ENCODE measurements at regions of chr1 and their contacts with region 1.

Region 1: DNA sequence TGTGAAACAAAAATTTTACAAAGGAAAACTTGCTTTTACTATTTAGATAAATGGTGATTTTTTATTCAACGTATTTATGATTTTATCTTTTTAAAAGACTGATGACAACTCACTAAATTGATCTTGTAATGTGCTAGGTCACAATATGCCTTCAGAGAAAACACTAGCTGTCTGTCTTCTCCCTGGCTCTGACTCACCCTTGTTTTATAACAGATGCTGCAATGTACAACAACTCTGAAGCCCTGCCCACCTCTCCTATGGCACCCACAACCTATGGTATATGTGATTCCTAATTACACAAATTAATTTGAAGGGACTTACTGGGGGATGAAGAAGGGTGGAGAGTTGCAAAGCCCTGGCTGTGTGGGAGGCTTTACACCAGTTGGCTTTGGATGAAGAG is 24.7 kb upstream of the HSD17B7 start:
- DNase-seq: no peak

Region 2: DNA sequence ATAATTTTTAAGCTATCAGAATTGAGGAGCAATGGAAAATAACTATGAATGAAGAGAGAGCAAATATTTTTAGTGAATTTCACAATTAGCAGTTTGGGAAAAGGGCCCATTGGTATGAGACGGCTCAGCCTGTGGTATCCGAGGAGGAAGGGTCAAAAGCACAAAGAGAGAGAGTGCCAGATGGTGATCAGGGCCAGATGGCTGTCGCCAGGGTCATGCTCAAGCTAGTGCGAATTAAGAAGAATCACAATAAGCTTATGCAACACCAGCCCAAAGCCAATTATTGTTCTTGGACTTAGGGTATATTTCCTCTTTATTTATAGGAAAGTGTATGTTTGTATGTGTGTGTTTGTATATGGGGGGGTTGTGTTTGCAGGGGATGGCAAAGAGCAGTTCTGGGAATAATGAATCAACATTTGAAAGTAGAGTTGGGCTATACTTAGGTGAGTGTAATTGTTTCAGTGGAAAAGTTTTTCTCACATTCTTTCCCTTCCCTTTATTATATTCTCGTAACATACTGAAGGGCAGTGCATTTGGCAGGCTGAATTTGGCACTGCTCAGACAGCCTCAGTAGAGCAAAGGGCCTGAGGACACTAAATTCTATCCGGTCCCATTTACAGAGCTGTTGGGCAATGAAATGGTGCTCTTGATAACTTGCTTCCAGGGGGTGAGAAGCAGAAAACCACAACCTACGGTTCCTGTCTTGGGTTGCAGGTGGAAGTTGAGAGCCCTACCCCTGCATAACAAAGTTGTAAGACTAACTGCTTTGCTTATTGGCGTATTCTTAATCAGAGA is 153.0 kb before region 1 on chr1:
- intact Hi-C with region 1: loop called in 1 of 2 experiments (anchors 10 kb)
- DNase-seq: peak; percentile 86

Region 3: GRCh38 chr1:162703708-162704107 is 62.1 kb before region 1 on chr1:
- intact Hi-C with region 1: no loop called
- DNase-seq: peak; percentile 84

Region 4: GRCh38 chr1:162740755-162741154 is 25.0 kb before region 1 on chr1:
- intact Hi-C with region 1: no loop called
- DNase-seq: no peak

Region 5: DNA sequence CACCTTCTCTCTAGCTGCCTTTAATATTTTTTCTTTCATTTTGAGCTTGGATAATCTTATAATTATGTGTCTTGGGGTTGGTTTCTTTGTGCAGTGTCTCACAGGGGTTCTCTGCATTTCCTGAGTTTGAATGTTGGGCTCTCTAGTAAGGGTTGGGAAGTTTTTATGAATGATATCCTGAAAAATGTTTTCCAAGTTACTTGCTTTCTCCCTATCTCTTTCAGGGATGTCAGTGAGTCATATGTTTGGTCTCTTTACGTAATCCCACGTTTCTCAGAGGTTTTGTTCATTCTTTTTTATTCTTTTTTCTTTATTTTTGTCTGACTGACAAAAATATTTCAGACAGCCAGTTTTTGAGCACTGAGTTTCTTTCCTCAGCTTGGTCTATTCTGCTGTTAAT is 150.6 kb after region 1 on chr1:
- intact Hi-C with region 1: no loop called
- DNase-seq: no peak

Measured in posterior vena cava (tissue), 2 donors.